Thyroid gland (tissue), 4 donors: ENCODE measurements at regions of chr22 and their contacts with region 1.

Region 1: DNA sequence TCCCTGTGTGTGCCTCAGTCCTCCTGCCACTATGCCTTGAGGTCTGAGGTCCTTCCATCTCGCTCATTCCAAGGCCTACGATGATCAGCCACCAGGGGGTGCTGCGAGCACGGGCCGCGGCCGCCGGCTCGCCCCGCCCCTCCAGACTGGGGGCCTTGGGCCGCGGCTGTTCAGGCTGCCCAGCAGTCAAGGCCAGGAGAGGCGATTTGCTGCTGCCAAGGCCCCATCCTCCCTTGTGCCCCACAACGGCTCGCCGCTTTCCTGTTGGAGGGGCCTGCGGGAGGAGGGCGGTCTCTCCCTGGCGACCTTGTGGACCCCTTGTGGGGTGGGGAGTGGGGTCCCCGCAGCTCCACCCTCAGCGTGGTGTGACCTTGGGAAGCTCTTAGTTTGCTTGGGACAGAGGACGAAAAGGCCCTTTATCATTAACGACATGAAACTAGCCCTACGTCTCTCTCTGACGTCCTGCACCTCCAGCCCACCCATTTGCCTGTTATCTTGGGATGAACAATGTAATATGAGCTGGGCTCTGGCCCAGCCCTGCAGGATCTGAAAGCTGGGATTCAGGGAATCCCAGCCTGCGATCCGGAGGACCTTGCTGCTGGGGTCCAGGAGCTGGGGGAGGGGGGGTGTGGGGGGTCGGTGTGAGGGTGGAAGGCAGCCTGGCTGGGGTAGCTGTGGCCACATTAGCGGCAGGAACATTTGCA is 5.3 kb upstream of the GALR3 start:
- DNase-seq: peak; percentile 81 to 84
- H3K4me3 ChIP-seq: peak overlapping the region in 1 of 3 donors; percentile 8
- H3K27ac ChIP-seq: no peak overlapping the region
- H3K4me1 ChIP-seq: peaks cover 15 to 16% of the 10 kb centered on the region in 2 donors
- H3K27me3 ChIP-seq: no peaks in the 10 kb centered on the region
- CTCF ChIP-seq: peak; percentile 74 to 98 (median 92)
- POLR2A ChIP-seq: peak in 1 of 2 donors; percentile 11

Region 2: DNA sequence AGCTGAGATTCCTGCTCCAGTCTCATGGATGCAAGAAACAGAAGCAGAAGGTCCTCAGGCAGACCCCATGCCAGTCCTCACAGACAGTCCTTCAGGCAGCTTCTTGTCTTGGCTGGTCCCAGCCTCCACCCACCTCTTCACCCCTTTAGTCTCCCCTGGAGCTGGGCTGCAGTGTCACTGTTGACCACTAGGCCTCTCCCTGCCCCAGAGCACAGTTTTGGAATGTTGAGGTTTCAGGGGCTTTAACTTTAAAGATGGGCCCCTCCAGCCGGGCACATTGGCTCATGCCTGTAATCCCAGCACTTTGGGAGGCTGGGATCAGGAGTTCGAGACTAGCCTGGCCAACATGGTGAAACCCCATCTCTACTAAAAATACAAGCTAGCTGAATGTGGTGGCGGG is 49.6 kb before region 1 on chr22:
- intact Hi-C with region 1: no loop called
- DNase-seq: no peak
- H3K4me3 ChIP-seq: no peak overlapping the region
- H3K27ac ChIP-seq: no peak overlapping the region
- H3K4me1 ChIP-seq: no peaks in the 10 kb centered on the region
- H3K27me3 ChIP-seq: no peaks in the 10 kb centered on the region
- CTCF ChIP-seq: peak in 1 of 6 experiments; percentile 10
- POLR2A ChIP-seq: no peak

Region 3: DNA sequence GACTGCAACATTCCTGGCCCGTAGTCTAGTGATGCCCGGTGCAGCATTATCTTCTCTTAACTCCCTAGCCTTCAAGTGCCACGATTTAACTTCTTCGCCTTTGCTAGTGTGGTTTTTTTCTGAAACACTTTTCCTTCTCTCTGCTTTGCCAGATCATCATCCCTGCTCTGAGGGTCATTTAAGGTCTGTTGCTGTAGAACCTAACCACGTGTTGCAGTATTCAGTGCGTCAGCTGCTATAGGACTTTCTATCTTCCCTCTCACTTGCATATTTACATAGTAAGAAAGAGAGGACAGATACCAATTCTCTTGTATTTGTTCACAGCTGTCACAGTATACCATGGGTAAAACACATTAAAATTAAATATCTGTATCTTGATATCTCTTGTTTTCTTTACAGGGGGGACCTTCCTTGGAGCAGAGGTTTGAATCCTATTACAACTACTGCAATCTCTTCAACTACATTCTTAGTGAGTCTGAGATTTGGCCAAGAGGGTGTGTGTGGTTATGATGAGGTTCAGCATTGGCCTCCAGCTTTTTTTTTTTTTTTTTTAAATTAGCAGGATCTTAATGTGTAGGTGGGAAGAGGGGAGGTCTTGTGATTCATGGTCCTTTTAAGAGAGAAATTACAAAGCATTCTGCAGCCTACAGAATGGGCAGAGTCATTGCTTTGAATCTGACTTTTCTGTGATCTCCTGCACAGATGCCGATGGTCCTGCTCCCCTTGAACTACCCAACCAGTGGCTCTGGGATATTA is 44.9 kb after region 1 on chr22:
- intact Hi-C with region 1: loop called (anchors 5 kb)
- DNase-seq: no peak
- H3K4me3 ChIP-seq: no peak overlapping the region
- H3K27ac ChIP-seq: peak overlapping the region in 1 of 3 donors; percentile 4
- H3K4me1 ChIP-seq: peaks cover 36 to 75% of the 10 kb centered on the region in 2 donors
- H3K27me3 ChIP-seq: no peaks in the 10 kb centered on the region
- CTCF ChIP-seq: no peak
- POLR2A ChIP-seq: no peak

Region 4: GRCh38 chr22:37933711-37934376 is 116.0 kb after region 1 on chr22:
- intact Hi-C with region 1: loop called (anchors 10 kb)
- DNase-seq: peak; percentile 92
- H3K4me3 ChIP-seq: no peak overlapping the region
- H3K27ac ChIP-seq: peak overlapping the region; percentile 47 to 66 (median 65)
- H3K4me1 ChIP-seq: peaks cover 17 to 37% of the 10 kb centered on the region in 2 donors
- H3K27me3 ChIP-seq: no peaks in the 10 kb centered on the region
- CTCF ChIP-seq: peak; percentile 84 to 99 (median 96)
- POLR2A ChIP-seq: no peak

Region 5: GRCh38 chr22:37965940-37966664 is 148.2 kb after region 1 on chr22:
- intact Hi-C with region 1: loop called (anchors 5 kb)
- DNase-seq: no peak
- H3K4me3 ChIP-seq: no peak overlapping the region
- H3K27ac ChIP-seq: no peak overlapping the region
- H3K4me1 ChIP-seq: no peaks in the 10 kb centered on the region
- H3K27me3 ChIP-seq: no peaks in the 10 kb centered on the region
- CTCF ChIP-seq: no peak
- POLR2A ChIP-seq: no peak